ENCODE measurements at regions of chr12 and their contacts with region 1.

Region 1: GRCh38 chr12:56189176-56189917 is at the start of gene SMARCC2:
- H3K4me3 ChIP-seq: peak within 1 kb of the TSS; percentile 87
- H3K27ac ChIP-seq: peak within 1 kb of the TSS; percentile 86
- H3K4me1 ChIP-seq: no peaks in the 10 kb centered on the region; the same call in 1 of the 2 replicates
- CTCF ChIP-seq: peak; percentile 92

Region 2: DNA sequence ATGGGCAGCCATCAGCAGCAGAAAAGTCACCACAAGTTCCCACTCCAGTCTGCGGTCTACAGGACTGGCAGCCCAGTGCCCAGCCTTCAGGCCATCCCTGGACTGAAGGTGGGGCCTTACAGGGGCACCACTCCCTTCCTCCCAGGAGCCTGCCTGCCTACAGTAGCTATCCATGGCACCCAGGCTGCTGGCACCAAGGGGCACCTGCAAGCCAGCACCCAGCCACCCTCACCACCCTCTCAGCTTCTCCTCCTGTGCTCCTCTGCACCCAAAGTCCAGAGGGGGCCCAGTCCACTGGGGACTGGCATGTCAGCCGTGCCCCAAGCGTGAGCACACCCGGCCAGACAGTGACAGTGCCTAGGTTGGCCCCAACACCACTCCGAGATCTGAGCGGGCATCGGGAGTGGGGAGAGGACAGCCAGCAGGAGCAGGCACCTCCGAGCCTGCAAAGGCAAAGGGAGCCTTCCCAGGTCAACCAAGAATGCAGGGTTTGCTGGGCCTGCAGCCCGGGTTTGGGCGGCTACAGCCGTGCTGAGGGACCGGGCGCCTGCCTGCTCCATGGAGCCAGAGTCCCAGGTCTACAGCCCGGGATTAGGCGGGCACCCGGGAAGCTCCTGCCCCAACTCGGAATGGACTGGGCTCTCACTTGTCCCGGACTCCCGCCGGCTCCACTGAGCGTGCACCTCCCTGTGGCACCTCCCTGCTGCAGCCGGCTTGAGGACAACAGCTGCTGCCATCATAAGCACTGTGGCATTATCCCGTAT is 797.1 kb before region 1 on chr12:
- CTCF ChIA-PET with region 1: no interaction called
- POLR2A ChIA-PET with region 1: no interaction called
- H3K4me3 ChIP-seq: no peak overlapping the region
- H3K27ac ChIP-seq: no peak overlapping the region
- H3K4me1 ChIP-seq: no peaks in the 10 kb centered on the region
- CTCF ChIP-seq: no peak

Region 3: DNA sequence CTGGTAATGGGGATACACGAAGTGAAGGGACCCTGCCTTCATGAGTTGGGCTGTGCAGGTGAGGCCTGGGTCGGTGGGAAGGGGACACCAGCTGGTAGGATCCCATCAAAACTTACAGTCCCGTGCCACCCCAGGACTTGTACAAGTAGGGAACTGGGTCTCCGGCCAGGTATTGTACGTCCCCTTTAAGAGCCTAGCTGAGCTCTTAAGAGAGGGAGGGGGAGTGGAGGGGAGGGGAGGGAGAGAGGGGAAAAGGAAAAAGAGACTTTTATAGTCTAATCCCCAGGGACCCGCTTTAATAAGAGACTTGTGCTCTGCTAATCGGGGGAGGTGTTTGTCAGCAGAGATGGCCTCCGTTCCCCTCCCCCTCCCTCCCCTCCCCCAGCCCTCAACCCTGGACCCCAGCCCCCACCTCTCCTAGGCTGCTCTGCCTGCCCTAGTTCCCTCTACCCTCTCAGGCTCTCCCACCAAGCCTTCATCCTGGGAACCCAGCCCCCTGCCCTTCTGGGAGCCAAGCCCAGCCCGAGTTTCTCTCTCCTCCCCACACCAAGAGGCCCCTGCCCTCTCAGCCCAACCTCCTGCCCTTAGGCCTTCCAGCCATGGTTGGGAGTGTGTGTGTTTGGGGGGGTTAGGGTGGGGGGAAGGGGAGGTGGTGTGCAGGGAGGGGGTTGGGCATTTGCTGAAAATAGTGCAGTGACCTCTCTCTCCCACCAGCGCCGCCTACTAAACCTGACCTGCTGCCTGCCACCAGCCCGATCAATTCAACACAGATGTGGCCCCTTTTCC is 443.8 kb before region 1 on chr12:
- CTCF ChIA-PET with region 1: no interaction called
- POLR2A ChIA-PET with region 1: no interaction called
- H3K4me3 ChIP-seq: no peak overlapping the region
- H3K27ac ChIP-seq: peak overlapping the region; percentile 36; the same call in 1 of the 2 replicates
- H3K4me1 ChIP-seq: peaks cover 12% of the 10 kb centered on the region; the same call in 1 of the 2 replicates
- CTCF ChIP-seq: no peak

Region 4: DNA sequence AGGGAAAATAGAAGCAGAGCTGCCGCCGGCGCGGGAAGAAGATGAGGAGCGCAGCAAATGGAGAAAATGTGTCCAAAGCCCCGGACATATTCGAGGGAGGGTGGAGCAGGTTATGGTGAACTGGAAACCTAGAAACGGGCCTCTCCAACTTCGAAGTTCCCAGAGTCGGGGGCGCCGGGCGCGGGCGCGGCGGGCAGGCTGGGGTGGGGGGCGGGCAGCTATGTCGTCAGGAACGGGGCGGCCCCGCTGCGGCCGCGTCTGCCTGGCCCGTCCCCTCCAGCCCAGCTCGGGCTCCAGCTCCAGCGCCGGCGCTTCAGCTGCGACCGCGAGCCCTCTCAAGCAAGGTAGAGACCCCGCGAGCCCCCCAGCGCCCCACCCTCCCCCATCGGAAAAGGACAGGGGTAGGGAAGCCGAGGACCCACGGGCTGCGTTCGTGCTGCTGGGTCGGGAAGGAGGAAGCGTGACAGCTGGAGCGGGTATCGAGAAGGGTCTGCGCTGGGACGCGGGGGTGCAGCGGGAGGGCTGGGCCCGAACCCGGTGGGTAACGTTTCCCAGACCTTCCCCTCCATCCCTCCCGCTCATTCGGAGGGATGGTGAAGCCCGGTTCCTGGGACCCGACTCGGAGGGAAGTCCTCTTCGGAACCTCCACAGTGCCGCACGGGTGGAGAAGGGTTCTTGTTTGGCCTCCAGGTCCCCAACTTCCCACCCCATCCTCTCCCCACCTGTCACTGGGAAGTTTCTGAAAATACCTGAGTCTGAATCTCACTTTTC is 257.4 kb before region 1 on chr12:
- CTCF ChIA-PET with region 1: no interaction called
- POLR2A ChIA-PET with region 1: no interaction called
- H3K4me3 ChIP-seq: peak overlapping the region; percentile 58
- H3K27ac ChIP-seq: no peak overlapping the region; the same call in 1 of the 2 replicates
- H3K4me1 ChIP-seq: peaks cover 4% of the 10 kb centered on the region; the same call in 1 of the 2 replicates
- CTCF ChIP-seq: no peak

Region 5: DNA sequence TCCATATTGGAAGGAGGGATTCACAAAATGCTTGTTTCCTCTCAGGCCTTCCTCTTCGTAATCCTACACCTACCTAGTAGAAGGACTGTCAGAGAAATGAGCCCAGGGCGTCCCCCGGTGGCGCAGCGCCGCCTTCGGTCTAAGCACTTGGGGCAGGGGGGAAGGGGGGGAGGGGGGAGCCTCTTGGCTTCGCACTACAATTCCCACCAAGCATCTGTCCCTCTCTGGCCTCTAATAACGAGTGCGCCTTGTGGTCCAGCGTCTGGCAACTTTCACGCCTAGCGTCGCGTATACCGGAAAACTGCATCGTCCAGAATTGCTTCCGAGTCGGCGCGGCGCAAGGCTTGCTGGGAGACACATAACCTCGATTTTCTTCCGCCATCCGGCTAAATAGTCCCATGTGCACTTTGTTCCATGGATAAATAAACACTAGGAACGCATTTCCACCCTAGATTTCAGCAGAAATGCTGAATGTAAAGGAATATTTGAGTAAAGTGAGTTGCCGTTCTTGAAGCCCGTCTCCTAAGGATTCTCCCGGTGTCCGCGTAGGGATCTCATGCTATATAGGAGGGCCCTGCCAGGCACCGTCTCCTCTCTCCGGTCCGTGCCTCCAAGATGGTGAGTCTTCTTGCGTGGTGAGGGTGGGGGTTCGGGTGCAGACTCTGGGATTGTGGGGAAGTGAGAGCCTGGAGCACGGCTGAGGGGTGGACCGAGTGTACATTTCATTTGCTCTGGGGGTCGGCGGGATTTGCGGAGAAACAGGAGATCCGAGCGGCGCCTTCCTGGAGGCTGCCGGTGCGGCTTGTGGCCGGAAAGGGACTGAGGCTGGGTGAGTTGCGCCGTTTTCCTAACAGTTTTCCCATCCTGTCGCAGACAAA is 147.6 kb before region 1 on chr12 and contains the start of gene RPS26:
- CTCF ChIA-PET with region 1: interaction called, 12 read pairs
- POLR2A ChIA-PET with region 1: interaction called, 9 read pairs
- H3K4me3 ChIP-seq: peak within 1 kb of the TSS; percentile 75
- H3K27ac ChIP-seq: peak within 1 kb of the TSS; percentile 93
- H3K4me1 ChIP-seq: peaks cover 19% of the 10 kb centered on the region
- CTCF ChIP-seq: peak; percentile 57

Region 6: GRCh38 chr12:56117778-56118687 is 71.3 kb before region 1 on chr12 and contains the start of gene ZC3H10:
- CTCF ChIA-PET with region 1: interaction called, 86 read pairs
- POLR2A ChIA-PET with region 1: interaction called, 50 read pairs
- H3K4me3 ChIP-seq: peak within 1 kb of the TSS; percentile 78
- H3K27ac ChIP-seq: peak within 1 kb of the TSS; percentile 99
- H3K4me1 ChIP-seq: peaks cover 5% of the 10 kb centered on the region
- CTCF ChIP-seq: peak; percentile 99

Region 7: DNA sequence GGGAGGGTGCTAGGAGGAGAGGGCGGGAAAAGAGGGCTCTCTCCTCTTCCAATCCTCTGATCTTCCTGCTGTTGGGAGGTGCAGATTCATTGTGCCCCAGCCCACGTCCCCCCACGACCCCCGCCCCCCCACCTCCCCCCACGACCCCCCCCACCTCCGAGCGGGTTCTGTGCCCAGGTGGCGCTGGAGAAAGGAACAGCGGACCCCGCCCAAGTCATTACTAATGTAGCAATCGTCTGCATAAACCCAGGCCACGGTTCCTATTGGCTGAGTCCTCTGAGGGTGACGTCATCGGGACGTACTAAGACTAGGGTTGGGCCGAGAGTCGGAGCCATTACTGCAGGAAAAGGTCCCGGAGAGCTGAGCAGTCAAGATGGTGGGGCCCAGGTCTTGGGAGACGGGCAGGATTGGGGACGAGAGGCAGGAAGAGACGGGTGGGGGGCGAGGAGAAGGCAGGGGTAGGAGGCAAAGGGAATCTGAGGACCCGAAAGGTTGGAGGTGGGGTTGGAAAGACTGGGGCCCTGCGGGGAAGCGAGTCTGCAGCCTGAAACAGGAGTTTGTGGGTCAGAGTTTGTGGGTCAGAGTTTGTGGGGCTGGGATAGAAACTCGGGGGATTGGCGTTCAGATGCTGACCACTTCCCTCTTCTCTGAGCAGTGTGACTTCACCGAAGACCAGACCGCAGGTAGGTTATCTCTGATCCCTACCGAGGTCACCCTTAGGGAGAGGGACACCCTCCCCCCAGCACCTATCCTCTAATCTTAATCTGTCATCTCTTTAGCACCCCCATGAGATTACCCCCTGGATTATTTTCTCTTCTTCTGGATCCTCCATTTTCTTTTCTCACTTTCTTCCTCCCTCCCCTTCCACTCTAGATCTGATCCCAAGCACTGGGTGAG is 31.1 kb before region 1 on chr12 and contains the start of gene MYL6:
- CTCF ChIA-PET with region 1: interaction called, 16 read pairs
- POLR2A ChIA-PET with region 1: interaction called, 29 read pairs
- H3K4me3 ChIP-seq: peak within 1 kb of the TSS; percentile 90
- H3K27ac ChIP-seq: peak within 1 kb of the TSS; percentile 92
- H3K4me1 ChIP-seq: peaks cover 3% of the 10 kb centered on the region; the same call in 1 of the 2 replicates
- CTCF ChIP-seq: peak; percentile 30

Region 8: GRCh38 chr12:56206457-56207166 is 17.3 kb after region 1 on chr12:
- CTCF ChIA-PET with region 1: interaction called, 28 read pairs
- POLR2A ChIA-PET with region 1: interaction called, 7 read pairs
- H3K4me3 ChIP-seq: no peak overlapping the region
- H3K27ac ChIP-seq: no peak overlapping the region
- H3K4me1 ChIP-seq: no peaks in the 10 kb centered on the region
- CTCF ChIP-seq: peak; percentile 49

Region 9: DNA sequence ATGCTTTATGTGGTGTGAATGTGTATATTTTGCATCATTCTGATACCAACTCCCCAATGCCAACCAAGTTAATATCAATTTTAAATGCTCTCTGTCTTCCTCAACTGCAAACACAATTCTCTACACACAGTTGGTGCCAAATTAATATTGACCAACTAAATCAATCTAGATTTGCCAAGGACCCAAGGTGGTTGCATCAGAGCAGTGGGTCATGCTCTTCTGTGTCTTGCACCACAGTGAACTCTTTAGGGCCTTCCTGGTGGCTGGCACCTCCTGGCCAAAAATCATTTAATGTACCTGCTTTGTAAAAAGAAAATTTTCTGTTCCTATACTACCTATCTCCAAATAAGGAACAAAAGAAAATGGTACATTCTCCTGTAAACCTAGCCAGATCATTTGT is 91.5 kb after region 1 on chr12:
- CTCF ChIA-PET with region 1: interaction called, 10 read pairs
- POLR2A ChIA-PET with region 1: no interaction called
- H3K4me3 ChIP-seq: no peak overlapping the region
- H3K27ac ChIP-seq: no peak overlapping the region
- H3K4me1 ChIP-seq: no peaks in the 10 kb centered on the region
- CTCF ChIP-seq: no peak

Region 10: GRCh38 chr12:56863789-56864188 is 674.4 kb after region 1 on chr12:
- CTCF ChIA-PET with region 1: no interaction called
- POLR2A ChIA-PET with region 1: no interaction called
- H3K4me3 ChIP-seq: no peak overlapping the region
- H3K27ac ChIP-seq: no peak overlapping the region
- H3K4me1 ChIP-seq: no peaks in the 10 kb centered on the region
- CTCF ChIP-seq: no peak